ENCODE measurements at regions of chr5 and their contacts with region 1.

Region 1: GRCh38 chr5:55534436-55535198 is at the start of gene PLPP1:
- DNase-seq: peak; percentile 92 to 93
- ATAC-seq: peak; percentile 94 to 97 (median 96)
- H3K4me3 ChIP-seq: peak within 1 kb of the TSS; percentile 58 to 95 (median 88)
- H3K27ac ChIP-seq: peak within 1 kb of the TSS; percentile 78 to 99 (median 96)
- H3K4me1 ChIP-seq: peaks cover 0 to 62% (median 36%) of the 10 kb centered on the region in 9 donors
- H3K27me3 ChIP-seq: peaks cover 0 to 8% (median 0%) of the 10 kb centered on the region in 7 donors
- CTCF ChIP-seq: peak in 2 of 9 donors; percentile 21 to 25
- total RNA-seq, gene PLPP1: 58.7 to 111 (median 75.4) TPM

Region 2: DNA sequence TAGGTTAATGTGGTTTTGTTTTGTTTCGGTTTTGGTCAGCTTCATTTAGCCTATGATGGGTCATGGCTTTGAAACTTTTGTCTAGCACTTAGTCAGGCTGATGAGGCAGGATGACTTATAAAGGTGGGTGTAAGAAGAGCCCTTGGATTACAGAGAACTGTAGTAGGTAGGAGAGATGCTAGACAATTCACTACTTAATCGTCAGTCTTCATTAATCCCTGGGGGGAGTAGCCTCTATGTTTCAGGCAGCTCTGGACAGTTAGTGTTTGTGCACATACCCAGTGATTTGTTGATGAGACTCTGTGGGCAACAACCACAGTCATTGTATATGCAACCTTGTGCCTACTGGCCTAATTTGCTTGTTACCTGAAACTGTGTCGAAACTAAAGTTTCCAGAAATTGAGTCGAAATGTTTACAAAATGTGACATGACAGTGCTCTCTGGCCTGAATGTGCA is 113.5 kb before region 1 on chr5:
- intact Hi-C with region 1: loop called in 4 of 10 experiments (anchors 10 kb)
- DNase-seq: no peak
- ATAC-seq: no peak
- H3K4me3 ChIP-seq: no peak overlapping the region
- H3K27ac ChIP-seq: peak overlapping the region in 3 of 10 donors; percentile 8 to 51 (median 36)
- H3K4me1 ChIP-seq: peaks cover 3 to 52% (median 29%) of the 10 kb centered on the region in 9 donors
- H3K27me3 ChIP-seq: no peaks in the 10 kb centered on the region
- CTCF ChIP-seq: no peak

Region 3: DNA sequence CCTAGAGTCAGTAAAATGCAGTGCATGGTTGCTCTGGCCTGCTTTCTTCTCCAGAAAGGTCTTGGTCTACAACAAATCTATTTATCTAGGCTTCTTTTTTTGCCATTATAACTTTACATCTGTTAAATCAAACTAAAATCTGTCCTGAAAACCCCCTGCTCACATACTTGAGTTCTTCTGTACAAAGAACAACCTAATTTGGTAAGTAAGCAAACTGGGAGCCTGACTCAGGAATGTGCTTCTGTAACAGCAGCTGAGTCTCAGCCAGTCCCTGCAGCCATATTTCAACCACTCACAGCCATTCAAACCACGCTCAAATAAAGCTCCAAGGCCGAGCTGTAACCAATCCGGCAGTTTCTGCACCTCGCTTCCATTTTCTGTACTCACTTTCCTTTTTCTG is 95.6 kb before region 1 on chr5:
- intact Hi-C with region 1: loop called in 2 of 10 experiments (anchors 5 to 10 kb)
- DNase-seq: no peak
- ATAC-seq: peak in 5 of 8 donors; percentile 33 to 52 (median 46)
- H3K4me3 ChIP-seq: no peak overlapping the region
- H3K27ac ChIP-seq: peak overlapping the region; percentile 30 to 90 (median 80)
- H3K4me1 ChIP-seq: peaks cover 21 to 78% (median 54%) of the 10 kb centered on the region in 9 donors
- H3K27me3 ChIP-seq: no peaks in the 10 kb centered on the region
- CTCF ChIP-seq: no peak

Region 4: GRCh38 chr5:55577353-55578060 is 42.9 kb after region 1 on chr5:
- intact Hi-C with region 1: loop called in 5 of 10 experiments (anchors 1 to 5 kb)
- DNase-seq: peak; percentile 50 to 80
- ATAC-seq: peak; percentile 90 to 96 (median 92)
- H3K4me3 ChIP-seq: no peak overlapping the region
- H3K27ac ChIP-seq: peak overlapping the region; percentile 63 to 93 (median 77)
- H3K4me1 ChIP-seq: peaks cover 14 to 56% (median 48%) of the 10 kb centered on the region in 9 donors
- H3K27me3 ChIP-seq: no peaks in the 10 kb centered on the region
- CTCF ChIP-seq: no peak

Region 5: GRCh38 chr5:55680353-55680752 is 145.7 kb after region 1 on chr5:
- intact Hi-C with region 1: loop called in 5 of 10 experiments (anchors 5 to 10 kb)
- DNase-seq: no peak
- ATAC-seq: peak in 3 of 8 donors; percentile 37 to 56 (median 53)
- H3K4me3 ChIP-seq: no peak overlapping the region
- H3K27ac ChIP-seq: peak overlapping the region in 2 of 10 donors; percentile 24 to 49
- H3K4me1 ChIP-seq: peaks cover 0 to 37% (median 23%) of the 10 kb centered on the region in 9 donors
- H3K27me3 ChIP-seq: no peaks in the 10 kb centered on the region
- CTCF ChIP-seq: no peak

Region 6: DNA sequence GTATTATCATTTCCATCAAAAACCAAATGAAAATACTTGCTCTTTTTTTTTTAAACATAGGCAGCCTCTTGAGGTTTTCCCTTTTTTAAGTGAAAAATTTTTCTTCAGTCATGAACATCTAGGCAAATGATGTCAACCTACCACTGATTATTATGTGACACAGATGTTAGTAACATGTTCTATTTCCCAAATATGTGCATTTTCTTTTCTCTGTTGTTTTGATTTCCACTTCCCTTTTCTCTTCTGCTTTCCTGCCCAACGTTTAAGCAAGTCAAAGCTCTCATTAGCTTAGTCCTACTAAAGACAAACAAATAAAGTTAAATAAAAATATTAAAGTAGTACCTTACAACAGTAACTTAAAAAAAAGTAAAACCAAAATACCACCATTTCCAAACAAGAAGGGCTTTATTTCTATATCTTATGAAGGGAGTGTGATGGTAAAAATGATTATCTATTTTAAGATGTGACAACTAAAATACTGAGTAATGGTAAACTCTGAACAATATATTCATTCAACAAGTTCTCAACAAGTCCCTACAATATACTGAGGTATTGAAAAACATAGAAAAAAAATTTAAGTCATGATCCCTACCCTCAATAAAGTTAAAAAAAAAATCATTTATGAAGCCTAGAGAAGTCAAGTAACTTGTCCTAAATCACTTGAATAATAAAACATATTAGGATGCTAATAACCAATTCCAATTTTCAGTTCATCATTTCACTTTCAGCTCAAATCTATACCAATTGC is 168.2 kb after region 1 on chr5:
- intact Hi-C with region 1: no loop called
- DNase-seq: no peak
- ATAC-seq: no peak
- H3K4me3 ChIP-seq: no peak overlapping the region
- H3K27ac ChIP-seq: no peak overlapping the region
- H3K4me1 ChIP-seq: peaks cover 0 to 11% (median 4%) of the 10 kb centered on the region in 9 donors
- H3K27me3 ChIP-seq: no peaks in the 10 kb centered on the region
- CTCF ChIP-seq: no peak